Activated CD4-positive, alpha-beta memory T cell treated with anti-CD3 and anti-CD28 coated beads for 36 hours (primary cell): ENCODE measurements at regions of chr6 and their contacts with region 1.

Region 1: DNA sequence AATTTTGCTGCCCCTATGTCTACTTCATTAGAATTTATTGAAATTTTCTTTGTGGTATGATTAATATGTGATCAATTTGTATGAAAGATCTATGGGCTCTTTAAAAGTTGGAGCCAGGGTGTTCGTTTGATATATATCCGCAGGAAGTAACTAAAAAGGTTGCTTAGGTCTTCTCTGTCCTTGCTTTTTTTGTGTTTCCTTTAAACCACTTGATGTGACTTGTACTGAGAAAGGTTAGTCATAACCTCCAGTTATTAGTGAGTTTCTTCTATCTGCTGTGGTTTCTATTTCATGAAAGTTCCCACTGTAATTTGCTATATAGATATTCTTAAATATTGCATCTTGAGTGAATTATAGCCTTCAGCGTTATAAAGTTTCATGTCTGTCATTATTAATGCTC is 585.3 kb upstream of the ARID1B start:
- DNase-seq: no peak
- H3K4me3 Mint-ChIP-seq: no peak overlapping the region
- H3K27ac Mint-ChIP-seq: no peak overlapping the region
- H3K4me1 Mint-ChIP-seq: peaks cover 17% of the 10 kb centered on the region
- H3K27me3 Mint-ChIP-seq: no peaks in the 10 kb centered on the region

Region 2: GRCh38 chr6:155544677-155545076 is 647.2 kb before region 1 on chr6:
- CTCF ChIA-PET with region 1: no interaction called
- POLR2A ChIA-PET with region 1: no interaction called
- intact Hi-C with region 1: no loop called
- DNase-seq: no peak
- H3K4me3 Mint-ChIP-seq: no peak overlapping the region
- H3K27ac Mint-ChIP-seq: no peak overlapping the region
- H3K4me1 Mint-ChIP-seq: no peaks in the 10 kb centered on the region
- H3K27me3 Mint-ChIP-seq: peaks cover 7% of the 10 kb centered on the region

Region 3: DNA sequence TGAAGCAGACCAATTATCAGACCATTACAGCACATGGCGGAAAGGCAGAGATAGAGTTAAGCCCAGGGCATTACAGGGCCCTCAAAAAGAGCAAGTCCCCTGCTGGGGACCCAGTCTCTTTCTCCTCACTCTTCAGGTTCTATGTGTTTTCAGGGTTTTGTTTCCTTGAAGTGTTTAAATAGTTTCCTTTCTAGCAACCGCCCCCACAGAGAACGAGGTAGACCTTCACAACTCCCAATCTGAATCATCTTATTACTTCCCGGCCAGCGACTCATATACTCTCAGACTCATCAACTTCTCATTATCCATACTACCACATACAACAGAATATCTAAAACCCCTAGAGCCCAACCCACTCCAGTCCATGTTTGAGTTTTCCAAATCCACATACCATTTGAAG is 58.7 kb after region 1 on chr6:
- CTCF ChIA-PET with region 1: no interaction called
- POLR2A ChIA-PET with region 1: no interaction called
- intact Hi-C with region 1: loop called (anchors 1 kb)
- DNase-seq: peak; percentile 63
- H3K4me3 Mint-ChIP-seq: no peak overlapping the region
- H3K27ac Mint-ChIP-seq: peak overlapping the region; percentile 71
- H3K4me1 Mint-ChIP-seq: peaks cover 18% of the 10 kb centered on the region
- H3K27me3 Mint-ChIP-seq: peaks cover 2% of the 10 kb centered on the region